ENCODE measurements at regions of chr2 and their contacts with region 1.

Region 1: GRCh38 chr2:225660262-225661131 is 261.0 kb downstream of the NYAP2 start:
- DNase-seq: no peak
- ATAC-seq: peak; percentile 86
- H3K4me3 ChIP-seq: no peak overlapping the region
- H3K27ac ChIP-seq: no peak overlapping the region
- H3K4me1 ChIP-seq: no peaks in the 10 kb centered on the region
- H3K27me3 ChIP-seq: no peaks in the 10 kb centered on the region; the same call in 1 of the 2 replicates
- CTCF ChIP-seq: peak; percentile 89

Region 2: GRCh38 chr2:225002039-225002655 is 658.4 kb before region 1 on chr2:
- CTCF ChIA-PET with region 1: no interaction called
- POLR2A ChIA-PET with region 1: no interaction called
- in situ Hi-C with region 1: no loop called
- intact Hi-C with region 1: loop called (anchors 10 kb)
- DNase-seq: peak; percentile 41
- ATAC-seq: peak; percentile 84
- H3K4me3 ChIP-seq: no peak overlapping the region
- H3K27ac ChIP-seq: peak overlapping the region; percentile 41; the same call in 1 of the 2 replicates
- H3K4me1 ChIP-seq: peaks cover 4% of the 10 kb centered on the region
- H3K27me3 ChIP-seq: no peaks in the 10 kb centered on the region
- CTCF ChIP-seq: peak; percentile 81

Region 3: GRCh38 chr2:225112362-225113126 is 548.0 kb before region 1 on chr2:
- CTCF ChIA-PET with region 1: no interaction called
- POLR2A ChIA-PET with region 1: no interaction called
- in situ Hi-C with region 1: no loop called
- intact Hi-C with region 1: no loop called
- DNase-seq: no peak
- ATAC-seq: no peak
- H3K4me3 ChIP-seq: no peak overlapping the region
- H3K27ac ChIP-seq: no peak overlapping the region
- H3K4me1 ChIP-seq: no peaks in the 10 kb centered on the region
- H3K27me3 ChIP-seq: no peaks in the 10 kb centered on the region
- CTCF ChIP-seq: no peak

Region 4: GRCh38 chr2:225282858-225283710 is 377.4 kb before region 1 on chr2:
- CTCF ChIA-PET with region 1: no interaction called
- POLR2A ChIA-PET with region 1: no interaction called
- in situ Hi-C with region 1: no loop called
- intact Hi-C with region 1: loop called (anchors 5 kb)
- DNase-seq: peak; percentile 28
- ATAC-seq: no peak
- H3K4me3 ChIP-seq: no peak overlapping the region
- H3K27ac ChIP-seq: no peak overlapping the region
- H3K4me1 ChIP-seq: no peaks in the 10 kb centered on the region
- H3K27me3 ChIP-seq: no peaks in the 10 kb centered on the region
- CTCF ChIP-seq: peak; percentile 71

Region 5: GRCh38 chr2:225569995-225570394 is 90.5 kb before region 1 on chr2:
- CTCF ChIA-PET with region 1: no interaction called
- POLR2A ChIA-PET with region 1: no interaction called
- in situ Hi-C with region 1: no loop called
- intact Hi-C with region 1: no loop called
- DNase-seq: no peak
- ATAC-seq: no peak
- H3K4me3 ChIP-seq: no peak overlapping the region
- H3K27ac ChIP-seq: no peak overlapping the region
- H3K4me1 ChIP-seq: no peaks in the 10 kb centered on the region
- H3K27me3 ChIP-seq: no peaks in the 10 kb centered on the region
- CTCF ChIP-seq: no peak

Region 6: GRCh38 chr2:226799181-226799975 is 1138.9 kb after region 1 on chr2 and contains the start of gene IRS1:
- CTCF ChIA-PET with region 1: interaction called, 12 read pairs
- POLR2A ChIA-PET with region 1: no interaction called
- in situ Hi-C with region 1: no loop called
- intact Hi-C with region 1: no loop called
- DNase-seq: no peak
- ATAC-seq: peak; percentile 37
- H3K4me3 ChIP-seq: peak within 1 kb of the TSS; percentile 73 to 79
- H3K27ac ChIP-seq: peak within 1 kb of the TSS; percentile 96
- H3K4me1 ChIP-seq: peaks cover 14% of the 10 kb centered on the region
- H3K27me3 ChIP-seq: no peaks in the 10 kb centered on the region
- CTCF ChIP-seq: peak; percentile 90
- total RNA-seq, gene IRS1: 27.3 TPM